ENCODE measurements at regions of chr22 and their contacts with region 1.

Region 1: GRCh38 chr22:24325105-24325757 is 54.6 kb downstream of the SPECC1L start:
- DNase-seq: peak in 4 of 14 experiments; percentile 13 to 73 (median 71)
- ATAC-seq: peak; percentile 75
- H3K4me3 ChIP-seq: no peak overlapping the region
- H3K4me3 Mint-ChIP-seq: no peak overlapping the region
- H3K27ac ChIP-seq: no peak overlapping the region
- H3K27ac Mint-ChIP-seq: no peak overlapping the region
- H3K4me1 ChIP-seq: peaks cover 4% of the 10 kb centered on the region
- H3K4me1 Mint-ChIP-seq: peaks cover 35% of the 10 kb centered on the region
- H3K27me3 ChIP-seq: no peaks in the 10 kb centered on the region
- H3K27me3 Mint-ChIP-seq: no peaks in the 10 kb centered on the region
- CTCF ChIP-seq: peak; percentile 80

Region 2: GRCh38 chr22:24043958-24044357 is 281.3 kb before region 1 on chr22:
- CTCF ChIA-PET with region 1: no interaction called
- POLR2A ChIA-PET with region 1: no interaction called
- intact Hi-C with region 1: no loop called
- DNase-seq: no peak
- ATAC-seq: no peak
- H3K4me3 ChIP-seq: no peak overlapping the region
- H3K4me3 Mint-ChIP-seq: no peak overlapping the region
- H3K27ac ChIP-seq: no peak overlapping the region
- H3K27ac Mint-ChIP-seq: no peak overlapping the region
- H3K4me1 ChIP-seq: peaks cover 4% of the 10 kb centered on the region
- H3K4me1 Mint-ChIP-seq: peaks cover 33% of the 10 kb centered on the region
- H3K27me3 ChIP-seq: no peaks in the 10 kb centered on the region
- H3K27me3 Mint-ChIP-seq: no peaks in the 10 kb centered on the region
- CTCF ChIP-seq: no peak

Region 3: GRCh38 chr22:24503137-24503842 is 178.1 kb after region 1 on chr22:
- CTCF ChIA-PET with region 1: no interaction called
- POLR2A ChIA-PET with region 1: no interaction called
- intact Hi-C with region 1: loop called in 1 of 2 experiments (anchors 5 kb)
- DNase-seq: peak; percentile 31 to 83 (median 52)
- ATAC-seq: peak; percentile 65
- H3K4me3 ChIP-seq: no peak overlapping the region
- H3K4me3 Mint-ChIP-seq: no peak overlapping the region
- H3K27ac ChIP-seq: no peak overlapping the region
- H3K27ac Mint-ChIP-seq: no peak overlapping the region
- H3K4me1 ChIP-seq: peaks cover 4% of the 10 kb centered on the region
- H3K4me1 Mint-ChIP-seq: peaks cover 7% of the 10 kb centered on the region
- H3K27me3 ChIP-seq: no peaks in the 10 kb centered on the region
- H3K27me3 Mint-ChIP-seq: no peaks in the 10 kb centered on the region
- CTCF ChIP-seq: peak; percentile 67

Region 4: GRCh38 chr22:24525416-24526037 is 200.3 kb after region 1 on chr22:
- CTCF ChIA-PET with region 1: no interaction called
- POLR2A ChIA-PET with region 1: no interaction called
- intact Hi-C with region 1: loop called (anchors 1 kb)
- DNase-seq: peak; percentile 60 to 88 (median 72)
- ATAC-seq: peak; percentile 98
- H3K4me3 ChIP-seq: no peak overlapping the region
- H3K4me3 Mint-ChIP-seq: no peak overlapping the region
- H3K27ac ChIP-seq: no peak overlapping the region
- H3K27ac Mint-ChIP-seq: no peak overlapping the region
- H3K4me1 ChIP-seq: peaks cover 13% of the 10 kb centered on the region
- H3K4me1 Mint-ChIP-seq: peaks cover 6% of the 10 kb centered on the region
- H3K27me3 ChIP-seq: no peaks in the 10 kb centered on the region
- H3K27me3 Mint-ChIP-seq: no peaks in the 10 kb centered on the region
- CTCF ChIP-seq: peak; percentile 70

Region 5: DNA sequence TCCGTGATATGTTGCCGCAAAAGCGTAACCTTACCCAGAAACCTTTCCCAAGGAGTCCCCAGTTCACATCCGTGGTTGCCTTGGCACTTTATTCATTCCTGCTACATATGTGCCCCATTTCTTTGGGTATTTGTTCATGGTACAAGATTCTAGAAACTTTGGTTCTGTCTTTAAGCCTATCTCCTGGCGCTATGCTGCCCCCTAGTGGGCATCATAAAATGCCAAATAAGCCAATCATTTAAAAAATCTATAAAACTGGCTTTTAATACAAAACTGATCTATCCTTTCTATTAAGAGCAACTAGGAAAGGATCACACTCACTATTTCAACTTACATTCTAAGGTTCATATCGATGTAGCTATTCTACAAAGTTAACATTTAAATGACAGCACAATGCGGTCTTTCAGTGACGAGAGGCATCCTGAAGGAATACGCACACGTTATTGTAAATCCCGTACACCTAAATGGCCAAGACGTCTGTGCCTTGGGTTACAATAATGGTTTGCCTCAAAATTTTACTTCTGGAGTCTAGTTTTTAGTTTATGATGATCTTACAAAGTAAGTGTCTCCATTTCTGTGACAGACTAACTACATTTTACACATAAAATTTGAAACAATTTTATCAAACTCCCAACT is 433.1 kb after region 1 on chr22:
- CTCF ChIA-PET with region 1: no interaction called
- POLR2A ChIA-PET with region 1: no interaction called
- intact Hi-C with region 1: loop called (anchors 5 kb)
- DNase-seq: peak; percentile 22 to 76 (median 46)
- ATAC-seq: no peak
- H3K4me3 ChIP-seq: no peak overlapping the region
- H3K4me3 Mint-ChIP-seq: no peak overlapping the region
- H3K27ac ChIP-seq: no peak overlapping the region
- H3K27ac Mint-ChIP-seq: no peak overlapping the region
- H3K4me1 ChIP-seq: no peaks in the 10 kb centered on the region
- H3K4me1 Mint-ChIP-seq: no peaks in the 10 kb centered on the region
- H3K27me3 ChIP-seq: peaks cover 0 to 3% of the 10 kb centered on the region in 2 experiments
- H3K27me3 Mint-ChIP-seq: peaks cover 6% of the 10 kb centered on the region
- CTCF ChIP-seq: peak; percentile 96